GM10248 (cell line): ENCODE measurements at regions of chr19 and their contacts with region 1.

Region 1: DNA sequence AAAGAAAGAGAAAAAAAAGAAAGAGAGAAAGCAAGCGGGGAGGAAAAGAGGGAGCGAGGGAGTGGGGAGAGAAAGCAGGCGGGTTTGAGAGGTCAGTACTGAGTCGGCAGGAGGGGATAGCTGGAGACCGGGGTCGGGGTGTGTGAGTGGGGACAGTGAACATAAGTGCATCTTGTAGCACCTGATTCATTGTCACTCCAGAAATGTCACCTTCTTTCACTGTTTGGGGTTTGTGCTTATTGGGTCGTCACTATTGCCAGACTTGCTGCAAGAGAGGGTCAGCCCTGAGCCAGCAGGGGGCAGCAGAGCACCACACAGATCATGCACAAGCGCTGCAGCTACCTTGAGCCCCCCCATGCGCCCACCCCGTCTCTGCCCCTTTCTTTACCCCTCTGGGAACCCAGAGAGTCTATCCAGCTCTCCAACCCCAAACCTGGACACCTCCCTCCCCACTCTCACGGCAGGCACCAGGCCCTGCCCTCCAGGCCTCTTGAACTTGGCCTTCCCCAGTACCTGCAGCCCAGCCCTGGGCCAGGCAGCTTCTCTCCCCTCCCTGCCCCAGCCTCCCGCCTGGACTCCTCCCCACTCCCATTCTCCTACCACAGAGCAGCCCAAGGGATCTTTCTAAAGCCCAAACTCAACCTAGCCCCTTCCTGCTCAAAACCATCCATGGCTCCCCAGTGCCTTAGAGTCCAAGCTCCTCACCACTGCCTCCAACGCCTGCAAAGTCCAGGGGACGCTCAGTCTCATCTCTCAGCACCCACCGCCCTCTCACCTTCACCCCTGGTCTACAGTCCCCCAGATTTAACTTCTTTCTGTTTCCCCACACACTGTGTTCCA is 9.7 kb upstream of the CEACAM16 start:
- DNase-seq: peak; percentile 73
- CTCF ChIP-seq: peak; percentile 90

Region 2: GRCh38 chr19:44582581-44583265 is 106.6 kb before region 1 on chr19:
- CTCF ChIA-PET with region 1: no interaction called
- POLR2A ChIA-PET with region 1: no interaction called
- DNase-seq: no peak
- CTCF ChIP-seq: no peak

Region 3: DNA sequence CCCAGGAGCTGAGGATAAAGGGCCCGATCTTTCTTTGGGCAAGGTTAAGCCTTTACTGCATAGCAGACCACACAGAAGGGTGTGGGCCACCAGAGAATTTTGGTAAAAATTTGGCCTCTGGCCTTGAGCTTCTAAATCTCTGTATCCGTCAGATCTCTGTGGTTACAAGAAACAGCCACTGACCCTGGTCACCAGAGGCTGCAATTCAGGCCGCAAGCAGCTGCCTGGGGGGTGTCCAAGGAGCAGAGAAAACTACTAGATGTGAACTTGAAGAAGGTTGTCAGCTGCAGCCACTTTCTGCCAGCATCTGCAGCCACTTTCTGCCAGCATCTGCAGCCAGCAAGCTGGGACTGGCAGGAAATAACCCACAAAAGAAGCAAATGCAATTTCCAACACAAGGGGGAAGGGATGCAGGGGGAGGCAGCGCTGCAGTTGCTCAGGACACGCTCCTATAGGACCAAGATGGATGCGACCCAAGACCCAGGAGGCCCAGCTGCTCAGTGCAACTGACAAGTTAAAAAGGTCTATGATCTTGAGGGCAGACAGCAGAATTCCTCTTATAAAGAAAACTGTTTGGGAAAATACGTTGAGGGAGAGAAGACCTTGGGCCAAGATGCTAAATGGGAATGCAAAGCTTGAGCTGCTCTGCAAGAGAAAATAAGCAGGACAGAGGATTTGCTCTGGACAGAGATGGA is 26.4 kb before region 1 on chr19:
- CTCF ChIA-PET with region 1: interaction called, 12 read pairs
- POLR2A ChIA-PET with region 1: no interaction called
- DNase-seq: no peak
- CTCF ChIP-seq: no peak

Region 4: GRCh38 chr19:44677019-44677821 is 12.1 kb before region 1 on chr19:
- CTCF ChIA-PET with region 1: interaction called, 11 read pairs
- POLR2A ChIA-PET with region 1: no interaction called
- DNase-seq: no peak
- CTCF ChIP-seq: no peak